GM12878 (cell line): ENCODE measurements at regions of chr12 and their contacts with region 1.

Region 1: GRCh38 chr12:43338848-43339526 is 213.0 kb downstream of the ADAMTS20 start:
- DNase-seq: peak; percentile 42
- ATAC-seq: peak; percentile 80
- H3K4me3 ChIP-seq: no peak overlapping the region
- H3K27ac ChIP-seq: no peak overlapping the region
- H3K4me1 ChIP-seq: peaks cover 15% of the 10 kb centered on the region
- H3K27me3 ChIP-seq: no peaks in the 10 kb centered on the region
- CTCF ChIP-seq: peak; percentile 56 to 70 (median 57)
- EP300 ChIP-seq: no peak
- POLR2A ChIP-seq: no peak
- RAD21 ChIP-seq: peak; percentile 82

Region 2: GRCh38 chr12:42469355-42470175 is 869.4 kb before region 1 on chr12:
- CTCF ChIA-PET with region 1: interaction called, 12 read pairs
- POLR2A ChIA-PET with region 1: no interaction called
- RAD21 ChIA-PET with region 1: interaction called, 10 read pairs
- SMC1A ChIA-PET with region 1: interaction called, 6 read pairs
- in situ Hi-C with region 1: no loop called
- intact Hi-C with region 1: no loop called
- DNase-seq: peak; percentile 97
- ATAC-seq: peak; percentile 96
- H3K4me3 ChIP-seq: peak overlapping the region; percentile 52
- H3K27ac ChIP-seq: peak overlapping the region; percentile 72
- H3K4me1 ChIP-seq: peaks cover 20% of the 10 kb centered on the region
- H3K27me3 ChIP-seq: no peaks in the 10 kb centered on the region
- CTCF ChIP-seq: no peak
- EP300 ChIP-seq: peak; percentile 57 to 87; a peak in 3 of 4 replicates
- POLR2A ChIP-seq: no peak
- RAD21 ChIP-seq: no peak

Region 3: GRCh38 chr12:42568952-42569915 is 769.8 kb before region 1 on chr12:
- CTCF ChIA-PET with region 1: interaction called, 14 read pairs
- POLR2A ChIA-PET with region 1: no interaction called
- RAD21 ChIA-PET with region 1: interaction called, 3 read pairs
- SMC1A ChIA-PET with region 1: interaction called, 5 read pairs
- in situ Hi-C with region 1: no loop called
- intact Hi-C with region 1: loop called (anchors 5 kb)
- DNase-seq: peak; percentile 38
- ATAC-seq: peak; percentile 85
- H3K4me3 ChIP-seq: no peak overlapping the region
- H3K27ac ChIP-seq: no peak overlapping the region
- H3K4me1 ChIP-seq: no peaks in the 10 kb centered on the region; the same call in 1 of the 2 replicates
- H3K27me3 ChIP-seq: no peaks in the 10 kb centered on the region
- CTCF ChIP-seq: peak; percentile 54 to 66 (median 54); a peak in 5 of 6 replicates
- EP300 ChIP-seq: no peak
- POLR2A ChIP-seq: no peak
- RAD21 ChIP-seq: peak; percentile 80

Region 4: GRCh38 chr12:42759622-42760273 is 579.2 kb before region 1 on chr12:
- CTCF ChIA-PET with region 1: no interaction called
- POLR2A ChIA-PET with region 1: no interaction called
- RAD21 ChIA-PET with region 1: no interaction called
- SMC1A ChIA-PET with region 1: no interaction called
- in situ Hi-C with region 1: no loop called
- intact Hi-C with region 1: loop called (anchors 5 kb)
- DNase-seq: no peak
- ATAC-seq: no peak
- H3K4me3 ChIP-seq: no peak overlapping the region
- H3K27ac ChIP-seq: no peak overlapping the region
- H3K4me1 ChIP-seq: peaks cover 24% of the 10 kb centered on the region
- H3K27me3 ChIP-seq: no peaks in the 10 kb centered on the region
- CTCF ChIP-seq: no peak
- EP300 ChIP-seq: no peak
- POLR2A ChIP-seq: no peak
- RAD21 ChIP-seq: no peak

Region 5: GRCh38 chr12:43325786-43326185 is 13.2 kb before region 1 on chr12:
- CTCF ChIA-PET with region 1: interaction called, 38 read pairs
- POLR2A ChIA-PET with region 1: interaction called, 4 read pairs
- RAD21 ChIA-PET with region 1: interaction called, 9 read pairs
- SMC1A ChIA-PET with region 1: interaction called, 19 read pairs
- in situ Hi-C with region 1: no loop called
- intact Hi-C with region 1: no loop called
- DNase-seq: no peak
- ATAC-seq: peak; percentile 80
- H3K4me3 ChIP-seq: no peak overlapping the region
- H3K27ac ChIP-seq: no peak overlapping the region
- H3K4me1 ChIP-seq: no peaks in the 10 kb centered on the region
- H3K27me3 ChIP-seq: no peaks in the 10 kb centered on the region
- CTCF ChIP-seq: no peak
- EP300 ChIP-seq: no peak
- POLR2A ChIP-seq: no peak
- RAD21 ChIP-seq: no peak

Region 6: GRCh38 chr12:43602738-43603137 is 263.8 kb after region 1 on chr12:
- CTCF ChIA-PET with region 1: no interaction called
- POLR2A ChIA-PET with region 1: no interaction called
- RAD21 ChIA-PET with region 1: no interaction called
- SMC1A ChIA-PET with region 1: no interaction called
- in situ Hi-C with region 1: no loop called
- intact Hi-C with region 1: no loop called
- DNase-seq: no peak
- ATAC-seq: no peak
- H3K4me3 ChIP-seq: no peak overlapping the region
- H3K27ac ChIP-seq: no peak overlapping the region
- H3K4me1 ChIP-seq: no peaks in the 10 kb centered on the region
- H3K27me3 ChIP-seq: no peaks in the 10 kb centered on the region
- CTCF ChIP-seq: no peak
- EP300 ChIP-seq: no peak
- POLR2A ChIP-seq: no peak
- RAD21 ChIP-seq: no peak